Mammary epithelial cell (primary cell): ENCODE measurements at regions of chr1 and their contacts with region 1.

Region 1: DNA sequence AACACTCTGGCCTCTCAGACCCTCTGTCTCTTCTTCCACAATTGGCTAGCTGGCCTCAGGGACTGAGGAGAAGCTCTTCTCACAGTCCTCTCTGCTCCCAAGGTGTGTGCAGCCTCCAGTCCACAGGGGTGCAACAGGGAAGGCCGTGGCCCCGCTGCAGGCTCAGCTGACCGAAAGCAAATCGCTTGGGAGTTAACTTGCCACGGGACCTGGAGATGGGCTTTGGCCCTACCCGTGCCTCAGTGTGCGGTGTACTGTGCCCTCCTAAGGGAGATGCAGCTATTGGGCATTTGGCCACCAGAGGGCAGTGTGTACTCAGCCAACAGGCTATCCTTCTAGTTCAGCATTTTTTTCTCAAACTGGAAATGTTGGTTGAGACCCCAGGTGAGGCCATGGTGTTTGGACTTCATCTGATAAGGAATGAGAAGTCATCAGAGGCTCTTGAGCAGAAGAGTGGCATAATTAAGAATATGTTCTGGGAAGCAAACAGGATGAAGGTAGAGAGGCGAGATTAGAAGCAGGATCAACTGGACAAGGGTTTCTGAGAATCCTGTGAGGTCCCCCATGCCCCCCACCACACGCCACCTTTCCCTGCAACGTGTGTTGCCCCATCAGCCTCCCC is 42.5 kb upstream of the TMEM125 start:
- DNase-seq: peak; percentile 37
- H3K4me3 ChIP-seq: no peak overlapping the region
- H3K27ac ChIP-seq: no peak overlapping the region
- H3K4me1 ChIP-seq: no peaks in the 10 kb centered on the region
- H3K27me3 ChIP-seq: no peaks in the 10 kb centered on the region
- CTCF ChIP-seq: peak; percentile 93 to 96

Region 2: DNA sequence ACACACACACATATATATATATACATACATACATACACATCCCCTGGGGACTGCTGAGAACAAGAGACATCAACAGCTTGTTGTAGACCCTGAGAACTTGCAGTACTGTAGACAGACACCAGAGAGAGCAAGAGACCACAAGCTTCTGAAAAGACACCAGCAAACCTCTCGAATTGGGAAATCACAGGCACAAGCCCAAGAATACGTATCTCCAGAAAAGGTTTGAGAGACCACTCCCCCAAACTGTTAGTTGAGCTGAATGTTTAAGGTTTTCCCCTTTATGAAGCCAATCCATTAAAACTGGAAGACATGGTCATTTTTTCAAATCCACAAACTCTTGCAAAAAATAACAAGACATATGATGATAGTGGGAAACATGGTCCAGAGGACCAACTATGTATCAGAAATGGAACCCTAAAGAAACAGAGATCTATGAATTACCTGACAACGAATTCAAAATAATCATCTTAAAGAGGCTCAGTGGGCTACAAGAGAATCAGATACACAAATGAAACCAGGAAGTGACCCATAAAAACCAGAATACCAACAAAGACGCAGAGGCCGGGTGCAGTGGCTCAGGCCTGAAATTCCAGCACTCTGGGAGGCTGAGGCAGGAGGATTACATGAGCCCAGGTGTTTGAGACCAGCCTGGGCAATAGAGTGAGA is 313.7 kb before region 1 on chr1:
- CTCF ChIA-PET with region 1: no interaction called
- dilution Hi-C with region 1: no loop called
- in situ Hi-C with region 1: no loop called
- intact Hi-C with region 1: loop called (anchors 1 kb)
- DNase-seq: peak; percentile 63
- H3K4me3 ChIP-seq: no peak overlapping the region
- H3K27ac ChIP-seq: no peak overlapping the region
- H3K4me1 ChIP-seq: no peaks in the 10 kb centered on the region
- H3K27me3 ChIP-seq: no peaks in the 10 kb centered on the region
- CTCF ChIP-seq: peak; percentile 76 to 79

Region 3: GRCh38 chr1:43383449-43383848 is 156.2 kb after region 1 on chr1:
- CTCF ChIA-PET with region 1: interaction called, 7 read pairs
- dilution Hi-C with region 1: no loop called
- in situ Hi-C with region 1: no loop called
- intact Hi-C with region 1: loop called (anchors 1 kb)
- DNase-seq: no peak
- H3K4me3 ChIP-seq: no peak overlapping the region
- H3K27ac ChIP-seq: no peak overlapping the region
- H3K4me1 ChIP-seq: peaks cover 5% of the 10 kb centered on the region
- H3K27me3 ChIP-seq: no peaks in the 10 kb centered on the region
- CTCF ChIP-seq: peak in 1 of 2 donors; percentile 39

Region 4: GRCh38 chr1:43452789-43453445 is 225.7 kb after region 1 on chr1:
- CTCF ChIA-PET with region 1: no interaction called
- dilution Hi-C with region 1: no loop called
- in situ Hi-C with region 1: no loop called
- intact Hi-C with region 1: no loop called
- DNase-seq: no peak
- H3K4me3 ChIP-seq: peak overlapping the region in 2 of 3 experiments; percentile 47 to 54
- H3K27ac ChIP-seq: no peak overlapping the region
- H3K4me1 ChIP-seq: peaks cover 20% of the 10 kb centered on the region
- H3K27me3 ChIP-seq: no peaks in the 10 kb centered on the region
- CTCF ChIP-seq: no peak

Region 5: DNA sequence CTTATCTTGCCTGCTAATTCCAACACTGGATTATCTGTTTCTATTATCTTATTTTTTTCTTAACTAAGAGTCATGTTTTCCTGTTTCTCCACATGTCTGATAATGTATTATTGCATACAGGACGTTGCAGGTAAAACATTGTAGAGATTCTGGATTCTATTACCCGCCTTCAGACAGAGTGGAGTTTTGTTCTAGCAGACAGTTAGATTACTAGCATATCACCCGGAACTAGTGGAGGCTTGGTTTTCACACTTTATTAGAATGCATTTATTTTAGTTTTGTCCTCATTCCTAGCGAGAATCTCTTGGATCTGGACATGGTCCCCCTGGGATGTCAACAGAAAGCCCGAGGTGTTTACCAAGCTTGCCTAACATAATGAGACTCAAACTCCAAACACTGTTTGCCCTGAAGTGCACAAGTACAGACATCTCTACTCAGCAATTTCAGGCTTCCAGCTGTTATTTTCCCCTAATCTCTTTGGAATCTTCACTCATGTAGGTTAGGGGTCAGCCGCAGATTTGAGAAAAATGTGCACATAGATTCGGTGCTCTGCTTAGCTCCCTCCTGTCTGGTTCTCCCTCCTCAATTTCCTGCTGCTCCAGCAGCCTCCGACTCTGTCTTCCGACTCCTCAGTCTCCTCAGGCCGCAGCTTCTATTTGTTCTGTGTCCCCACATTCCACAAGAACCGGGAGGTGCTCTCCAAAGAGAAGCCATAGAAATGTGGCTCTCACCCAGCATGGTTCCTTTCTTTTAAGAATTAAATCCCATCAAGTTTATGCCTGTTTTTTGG is 266.6 kb after region 1 on chr1:
- CTCF ChIA-PET with region 1: no interaction called
- dilution Hi-C with region 1: no loop called
- in situ Hi-C with region 1: no loop called
- intact Hi-C with region 1: no loop called
- DNase-seq: no peak
- H3K4me3 ChIP-seq: no peak overlapping the region
- H3K27ac ChIP-seq: no peak overlapping the region
- H3K4me1 ChIP-seq: peaks cover 9% of the 10 kb centered on the region
- H3K27me3 ChIP-seq: no peaks in the 10 kb centered on the region
- CTCF ChIP-seq: no peak

Region 6: GRCh38 chr1:43650310-43651085 is 423.2 kb after region 1 on chr1:
- CTCF ChIA-PET with region 1: interaction called, 5 read pairs
- dilution Hi-C with region 1: no loop called
- in situ Hi-C with region 1: loop called in 1 of 2 experiments (anchors 25 kb)
- intact Hi-C with region 1: no loop called
- DNase-seq: peak; percentile 95
- H3K4me3 ChIP-seq: peak overlapping the region; percentile 69 to 81 (median 75)
- H3K27ac ChIP-seq: peak overlapping the region; percentile 92
- H3K4me1 ChIP-seq: peaks cover 20% of the 10 kb centered on the region
- H3K27me3 ChIP-seq: no peaks in the 10 kb centered on the region
- CTCF ChIP-seq: no peak